ENCODE measurements at regions of chr12 and their contacts with region 1.

Region 1: GRCh38 chr12:8081251-8081920 is 688 bp upstream of the NECAP1 start:
- DNase-seq: no peak
- H3K4me3 ChIP-seq: peak overlapping the region; percentile 69 to 89
- H3K27ac ChIP-seq: peak overlapping the region; percentile 95 to 96
- H3K4me1 ChIP-seq: peaks cover 6% of the 10 kb centered on the region
- H3K27me3 ChIP-seq: no peaks in the 10 kb centered on the region
- CTCF ChIP-seq: no peak
- POLR2A ChIP-seq: no peak

Region 2: GRCh38 chr12:8026291-8026900 is 55.0 kb before region 1 on chr12:
- intact Hi-C with region 1: loop called (anchors 2 kb)
- DNase-seq: peak; percentile 99
- H3K4me3 ChIP-seq: peak overlapping the region; percentile 54 to 68
- H3K27ac ChIP-seq: peak overlapping the region; percentile 99 to 100
- H3K4me1 ChIP-seq: no peaks in the 10 kb centered on the region
- H3K27me3 ChIP-seq: no peaks in the 10 kb centered on the region
- CTCF ChIP-seq: no peak
- POLR2A ChIP-seq: no peak

Region 3: DNA sequence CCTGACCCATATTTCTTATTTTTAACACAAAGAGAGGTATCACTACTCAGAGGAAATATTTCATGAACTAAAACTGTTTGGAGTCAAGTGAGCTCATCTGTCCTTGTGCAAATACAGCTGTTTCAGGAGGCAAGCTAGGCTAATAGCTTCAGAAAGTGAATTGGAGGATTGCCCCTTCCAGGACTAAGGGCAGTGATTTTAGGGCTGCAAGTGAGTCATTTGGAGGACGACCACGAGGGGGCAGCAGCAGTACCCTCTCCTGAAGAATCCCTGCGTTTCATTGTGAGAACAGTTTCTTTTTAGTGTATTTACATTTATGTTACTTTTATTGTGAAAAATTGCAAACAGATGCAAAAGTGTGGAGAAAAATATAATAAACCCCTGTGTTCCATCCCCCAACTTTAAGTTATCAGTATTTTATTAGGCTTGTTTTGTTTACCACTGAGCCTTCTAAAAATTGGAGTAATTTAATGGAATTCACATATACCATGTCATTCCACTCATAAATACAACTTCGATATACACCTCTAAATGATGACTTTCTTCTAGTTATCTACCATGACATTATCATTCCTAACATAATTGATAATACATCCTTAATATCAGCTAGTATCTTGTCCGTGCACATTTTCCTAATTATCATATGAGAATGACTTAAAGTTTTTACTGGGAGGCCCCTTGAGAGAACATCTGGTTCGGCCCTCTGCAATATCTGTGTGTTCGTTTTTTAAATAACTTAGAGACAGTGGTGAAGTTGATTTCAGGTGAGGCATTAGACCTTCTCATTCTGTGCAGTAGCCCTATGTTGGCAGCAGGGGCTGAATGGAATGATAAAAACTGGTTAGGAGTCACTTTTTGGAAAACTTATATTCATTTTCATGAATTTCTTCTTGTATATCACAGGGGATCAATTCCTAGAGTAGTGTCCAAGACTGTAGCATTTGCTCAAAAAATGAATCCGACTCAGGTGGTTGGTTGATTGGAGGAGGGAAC is 35.1 kb before region 1 on chr12:
- intact Hi-C with region 1: loop called (anchors 5 kb)
- DNase-seq: peak; percentile 59
- H3K4me3 ChIP-seq: no peak overlapping the region
- H3K27ac ChIP-seq: no peak overlapping the region
- H3K4me1 ChIP-seq: no peaks in the 10 kb centered on the region
- H3K27me3 ChIP-seq: no peaks in the 10 kb centered on the region
- CTCF ChIP-seq: peak; percentile 58 to 77 (median 64)
- POLR2A ChIP-seq: no peak

Region 4: DNA sequence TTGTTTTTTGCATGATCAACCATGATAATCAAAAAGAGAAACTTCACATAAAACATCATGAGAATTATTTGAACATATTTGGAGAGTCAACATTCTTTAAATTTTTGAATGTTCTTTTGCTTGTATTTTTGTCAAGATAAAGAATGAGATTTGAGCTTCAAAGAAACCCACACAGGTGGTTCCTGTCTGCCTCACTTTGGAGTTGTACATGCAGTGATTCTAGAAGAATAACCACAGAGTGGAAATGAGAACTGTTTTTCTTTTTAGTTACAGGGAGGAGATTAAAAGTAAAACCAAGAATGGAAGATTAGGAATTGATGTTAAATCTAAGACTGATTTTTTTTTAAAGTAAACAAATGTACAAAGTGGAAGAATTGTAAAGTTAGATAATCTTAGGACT is 73.1 kb after region 1 on chr12:
- intact Hi-C with region 1: no loop called
- DNase-seq: no peak
- H3K4me3 ChIP-seq: no peak overlapping the region
- H3K27ac ChIP-seq: no peak overlapping the region
- H3K4me1 ChIP-seq: no peaks in the 10 kb centered on the region
- H3K27me3 ChIP-seq: no peaks in the 10 kb centered on the region
- CTCF ChIP-seq: no peak
- POLR2A ChIP-seq: no peak

Measured in prostate gland (tissue), 2 donors.